Activated naive CD4-positive, alpha-beta T cell treated with anti-CD3 and anti-CD28 coated beads, Interleukin-2, amount 10 ng/mL, durations not matched to agents 7 days and 5 days (primary cell): ENCODE measurements at regions of chr18 and their contacts with region 1.

Region 1: DNA sequence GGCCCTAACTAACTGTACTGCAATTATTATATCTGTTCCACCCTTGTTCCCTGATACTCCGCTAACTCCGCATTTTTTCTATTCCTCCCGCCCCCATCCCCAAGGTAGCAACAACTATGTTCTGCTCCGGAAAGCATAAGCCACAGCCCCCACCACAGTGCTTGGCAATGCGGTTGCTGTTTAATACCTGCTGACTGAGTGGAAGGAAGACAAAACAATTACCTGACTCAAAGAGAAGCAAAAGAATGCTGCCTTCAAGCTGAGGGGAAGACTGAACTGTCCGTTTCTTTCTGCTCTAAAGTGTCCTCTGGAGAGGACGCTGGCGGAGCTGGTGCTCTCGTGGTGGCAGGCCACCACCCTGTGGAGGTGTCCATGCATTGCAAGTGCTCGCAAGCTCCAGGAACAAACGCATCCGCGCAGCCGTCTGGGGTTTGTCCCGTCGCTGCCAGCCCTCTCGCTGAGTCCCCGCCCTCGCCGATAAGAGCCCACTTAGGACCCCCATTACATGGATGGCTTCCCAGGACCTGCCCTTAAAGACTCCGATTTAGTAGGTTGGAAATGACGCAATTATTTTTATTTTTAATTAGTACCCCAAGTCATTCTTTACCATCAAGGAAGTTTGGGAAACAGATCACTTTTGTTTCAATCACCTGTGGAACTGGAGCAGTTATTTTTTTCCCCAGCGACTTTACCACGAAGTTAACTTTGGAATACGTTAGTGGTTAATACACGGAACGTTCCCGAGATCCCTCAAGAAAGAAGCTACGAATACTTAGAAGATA is 1.6 kb upstream of the MYL12A start:
- DNase-seq: peak; percentile 87
- H3K4me3 Mint-ChIP-seq: peak overlapping the region; percentile 88
- H3K27ac Mint-ChIP-seq: peak overlapping the region; percentile 99
- H3K4me1 Mint-ChIP-seq: peaks cover 28% of the 10 kb centered on the region
- H3K27me3 Mint-ChIP-seq: peaks cover 7% of the 10 kb centered on the region

Region 2: GRCh38 chr18:2985628-2986027 is 260.4 kb before region 1 on chr18:
- CTCF ChIA-PET with region 1: interaction called, 14 read pairs
- DNase-seq: no peak
- H3K4me3 Mint-ChIP-seq: no peak overlapping the region
- H3K27ac Mint-ChIP-seq: no peak overlapping the region
- H3K4me1 Mint-ChIP-seq: peaks cover 76% of the 10 kb centered on the region
- H3K27me3 Mint-ChIP-seq: no peaks in the 10 kb centered on the region

Region 3: GRCh38 chr18:3129053-3129864 is 116.8 kb before region 1 on chr18:
- CTCF ChIA-PET with region 1: interaction called, 11 read pairs
- DNase-seq: peak; percentile 89
- H3K4me3 Mint-ChIP-seq: no peak overlapping the region
- H3K27ac Mint-ChIP-seq: no peak overlapping the region
- H3K4me1 Mint-ChIP-seq: peaks cover 10% of the 10 kb centered on the region
- H3K27me3 Mint-ChIP-seq: peaks cover 3% of the 10 kb centered on the region

Region 4: GRCh38 chr18:3234457-3234856 is 11.6 kb before region 1 on chr18:
- CTCF ChIA-PET with region 1: interaction called, 12 read pairs
- DNase-seq: no peak
- H3K4me3 Mint-ChIP-seq: no peak overlapping the region
- H3K27ac Mint-ChIP-seq: no peak overlapping the region
- H3K4me1 Mint-ChIP-seq: no peaks in the 10 kb centered on the region
- H3K27me3 Mint-ChIP-seq: no peaks in the 10 kb centered on the region